Activated CD4-positive, alpha-beta memory T cell treated with anti-CD3 and anti-CD28 coated beads, Interleukin-2, amount 10 ng/mL, durations not matched to agents 7 days and 5 days (primary cell): ENCODE measurements at regions of chr1 and their contacts with region 1.

Region 1: GRCh38 chr1:116418091-116418830 is 45.2 kb downstream of the ATP1A1 start:
- DNase-seq: peak; percentile 90
- H3K4me3 Mint-ChIP-seq: peak overlapping the region; percentile 87
- H3K27ac Mint-ChIP-seq: peak overlapping the region; percentile 83
- H3K4me1 Mint-ChIP-seq: peaks cover 50% of the 10 kb centered on the region
- H3K27me3 Mint-ChIP-seq: peaks cover 9% of the 10 kb centered on the region

Region 2: DNA sequence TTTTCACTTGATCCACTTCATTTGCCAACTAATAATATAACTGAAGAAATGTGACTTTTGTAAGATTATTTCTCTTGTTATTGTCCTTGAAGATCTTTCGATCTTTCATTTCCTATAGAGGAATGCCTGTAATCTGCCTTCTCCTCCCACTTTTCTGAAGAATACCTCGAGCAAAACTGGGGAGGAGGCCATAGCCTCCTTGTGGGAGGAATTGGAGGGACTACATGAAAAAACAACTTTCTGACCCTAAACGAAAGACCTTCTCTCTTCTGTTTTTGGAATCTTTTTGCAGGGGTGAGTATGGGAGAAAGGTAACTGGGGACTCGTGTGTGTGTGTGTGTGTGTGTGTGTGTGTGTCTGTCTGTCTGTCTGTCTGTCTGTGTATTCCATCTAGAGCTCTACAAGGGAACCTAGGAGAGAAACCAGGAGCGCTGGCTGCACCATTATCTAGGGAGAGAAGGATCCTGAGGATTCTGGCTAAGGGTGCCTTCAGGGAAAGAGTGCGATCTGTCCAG is 339.5 kb before region 1 on chr1:
- CTCF ChIA-PET with region 1: no interaction called
- POLR2A ChIA-PET with region 1: no interaction called
- DNase-seq: no peak
- H3K4me3 Mint-ChIP-seq: no peak overlapping the region
- H3K27ac Mint-ChIP-seq: no peak overlapping the region
- H3K4me1 Mint-ChIP-seq: no peaks in the 10 kb centered on the region
- H3K27me3 Mint-ChIP-seq: peaks cover 3% of the 10 kb centered on the region

Region 3: DNA sequence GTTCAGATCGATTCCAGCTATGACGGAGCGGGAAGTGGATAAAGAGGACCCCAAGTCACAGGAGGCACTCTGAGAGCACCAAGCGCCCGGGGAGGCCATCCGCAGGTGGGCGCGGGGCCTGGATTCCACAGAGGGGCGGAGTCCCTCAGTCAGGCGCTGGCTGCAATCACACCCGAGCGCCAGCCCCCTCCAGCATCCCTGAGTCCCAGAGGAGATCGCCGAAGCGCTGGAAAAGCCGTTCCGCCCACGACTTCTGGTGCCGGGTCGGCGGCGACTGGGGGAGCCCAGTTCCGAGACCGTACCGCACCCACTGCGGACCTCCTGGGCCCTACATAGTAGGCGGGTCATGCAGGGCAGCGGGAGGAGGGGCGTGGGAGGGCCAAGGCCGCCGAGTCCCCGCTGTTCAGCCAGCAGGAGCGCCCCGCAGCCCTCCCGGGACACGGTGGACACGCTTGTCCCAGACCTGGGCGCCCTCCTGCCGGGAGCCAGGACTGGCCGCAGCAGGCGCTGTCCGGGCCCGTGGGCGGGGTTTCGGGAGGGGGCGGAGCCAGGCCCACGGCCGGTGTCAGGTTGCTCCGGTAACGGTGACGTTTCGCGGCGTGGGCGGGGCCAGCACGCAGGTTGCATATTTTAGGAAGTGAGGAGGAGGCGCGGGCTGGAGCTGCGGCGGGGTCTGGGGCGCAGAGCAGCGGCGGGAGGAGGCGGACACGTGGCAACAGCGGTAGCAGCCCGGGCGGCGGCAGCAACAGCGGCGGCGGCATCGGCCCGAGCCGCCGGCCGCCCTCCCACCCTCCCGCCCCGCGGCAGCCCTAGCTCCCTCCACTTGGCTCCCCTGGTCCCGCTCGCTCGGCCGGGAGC is 45.4 kb before region 1 on chr1 and contains the start of gene ATP1A1:
- CTCF ChIA-PET with region 1: interaction called, 20 read pairs
- POLR2A ChIA-PET with region 1: interaction called, 39 read pairs
- DNase-seq: peak; percentile 98
- H3K4me3 Mint-ChIP-seq: peak within 1 kb of the TSS; percentile 98
- H3K27ac Mint-ChIP-seq: peak within 1 kb of the TSS; percentile 89
- H3K4me1 Mint-ChIP-seq: peaks cover 43% of the 10 kb centered on the region
- H3K27me3 Mint-ChIP-seq: peaks cover 26% of the 10 kb centered on the region
- total RNA-seq, gene ATP1A1: 238 to 241 TPM

Region 4: GRCh38 chr1:116390195-116390594 is 28.1 kb before region 1 on chr1:
- CTCF ChIA-PET with region 1: interaction called, 4 read pairs
- POLR2A ChIA-PET with region 1: interaction called, 35 read pairs
- DNase-seq: peak; percentile 75
- H3K4me3 Mint-ChIP-seq: no peak overlapping the region
- H3K27ac Mint-ChIP-seq: peak overlapping the region; percentile 50
- H3K4me1 Mint-ChIP-seq: peaks cover 63% of the 10 kb centered on the region
- H3K27me3 Mint-ChIP-seq: no peaks in the 10 kb centered on the region

Region 5: DNA sequence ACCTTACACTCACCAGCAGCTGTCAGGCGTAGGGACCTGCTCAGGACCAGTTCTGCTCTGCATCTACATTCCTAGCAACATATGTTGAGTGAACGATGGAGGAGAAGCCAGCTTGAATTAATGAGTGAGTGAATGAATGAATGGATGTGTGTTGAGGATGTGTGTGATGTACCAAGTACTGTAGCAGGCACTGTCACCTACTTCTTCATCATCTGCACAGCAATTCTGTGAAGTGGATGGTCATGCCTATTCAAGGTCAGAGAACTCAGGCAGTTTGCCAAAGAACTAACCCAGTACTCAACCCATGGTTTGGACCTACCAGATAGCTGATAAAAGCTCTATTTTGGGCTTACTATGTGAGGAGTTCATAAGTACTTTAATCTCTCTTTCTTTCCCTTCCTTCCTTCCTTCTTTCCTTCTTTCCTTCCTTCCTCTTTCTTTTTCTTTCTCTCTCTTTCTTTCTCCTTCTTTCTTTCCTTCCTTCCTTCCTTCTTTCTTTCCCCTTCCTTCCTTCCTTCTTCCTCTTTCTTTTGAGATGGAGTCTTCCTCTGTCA is 11.6 kb after region 1 on chr1:
- CTCF ChIA-PET with region 1: no interaction called
- POLR2A ChIA-PET with region 1: interaction called, 10 read pairs
- DNase-seq: no peak
- H3K4me3 Mint-ChIP-seq: no peak overlapping the region
- H3K27ac Mint-ChIP-seq: no peak overlapping the region
- H3K4me1 Mint-ChIP-seq: no peaks in the 10 kb centered on the region
- H3K27me3 Mint-ChIP-seq: peaks cover 20% of the 10 kb centered on the region

Region 6: DNA sequence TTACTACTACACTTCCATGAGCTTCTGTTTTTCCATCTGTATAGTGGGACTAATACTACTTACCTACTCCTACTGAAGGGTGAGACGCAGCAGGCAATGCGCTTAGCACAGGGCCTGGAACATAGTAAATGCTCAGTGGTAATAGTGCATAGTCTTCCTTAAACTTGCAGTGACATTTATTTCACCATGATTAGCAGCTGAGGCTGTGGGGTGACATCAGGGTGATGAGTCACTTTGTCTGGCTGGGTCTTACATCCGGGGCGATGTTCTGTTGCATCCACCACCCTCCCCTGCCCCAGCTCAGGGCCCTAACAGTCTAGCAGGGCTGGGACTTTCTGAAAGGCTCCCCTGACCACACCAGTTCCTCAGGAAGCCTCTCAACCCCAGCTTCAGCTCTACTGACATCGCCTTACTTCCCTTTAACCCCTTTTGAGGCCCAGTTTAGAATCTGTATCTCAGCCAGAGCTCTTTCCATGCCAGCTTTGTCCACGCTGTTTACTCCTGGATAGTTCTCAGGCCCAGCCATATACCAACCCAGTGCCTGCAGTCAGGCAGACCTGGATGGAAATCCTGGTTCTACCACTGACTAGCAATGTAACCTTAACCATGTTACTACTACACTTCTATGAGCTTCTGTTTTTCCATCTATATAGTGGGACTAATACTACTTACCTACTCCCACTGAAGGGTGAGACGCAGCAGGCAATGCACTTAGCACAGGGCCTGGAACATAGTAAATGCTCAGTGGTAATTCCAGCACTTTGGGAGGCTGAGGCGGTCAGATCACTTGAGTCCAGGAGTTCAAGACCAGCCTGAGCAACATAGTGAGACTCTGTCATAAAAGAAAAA is 86.3 kb after region 1 on chr1:
- CTCF ChIA-PET with region 1: interaction called, 12 read pairs
- POLR2A ChIA-PET with region 1: interaction called, 14 read pairs
- DNase-seq: peak; percentile 93
- H3K4me3 Mint-ChIP-seq: peak overlapping the region; percentile 1
- H3K27ac Mint-ChIP-seq: peak overlapping the region; percentile 89
- H3K4me1 Mint-ChIP-seq: peaks cover 90% of the 10 kb centered on the region
- H3K27me3 Mint-ChIP-seq: no peaks in the 10 kb centered on the region